HepG2 (cell line): ENCODE measurements at regions of chrX and their contacts with region 1.

Region 1: DNA sequence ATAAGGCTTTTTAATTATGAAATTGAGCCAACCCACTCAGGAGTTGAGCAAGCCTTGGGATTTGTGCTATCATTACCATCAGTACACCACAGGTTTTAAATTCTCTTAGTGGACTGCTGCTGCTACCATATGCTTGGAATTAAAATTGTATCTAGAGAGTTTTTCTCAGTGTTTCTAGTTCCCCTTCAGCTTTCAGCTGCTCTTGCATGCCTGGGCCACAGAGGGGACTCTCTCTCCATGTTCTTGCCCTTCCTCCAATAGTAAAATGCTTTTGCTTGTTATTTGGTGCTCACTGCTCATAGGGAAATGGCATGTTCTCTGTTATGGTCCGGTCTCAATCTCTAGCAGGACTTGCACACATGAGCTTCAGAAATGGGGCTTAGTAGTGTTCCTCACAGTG is 101.9 kb downstream of the IGSF1 start:
- DNase-seq: no peak
- ATAC-seq: no peak
- H3K4me3 ChIP-seq: no peak overlapping the region
- H3K27ac ChIP-seq: no peak overlapping the region
- H3K4me1 ChIP-seq: no peaks in the 10 kb centered on the region
- H3K27me3 ChIP-seq: no peaks in the 10 kb centered on the region
- CTCF ChIP-seq: no peak
- EP300 ChIP-seq: no peak
- POLR2A ChIP-seq: no peak
- RAD21 ChIP-seq: no peak

Region 2: GRCh38 chrX:130401415-130402207 is 785.6 kb before region 1 on chrX and contains the start of gene RBMX2:
- CTCF ChIA-PET with region 1: no interaction called
- POLR2A ChIA-PET with region 1: no interaction called
- in situ Hi-C with region 1: no loop called
- intact Hi-C with region 1: no loop called
- DNase-seq: peak; percentile 57
- ATAC-seq: peak; percentile 95
- H3K4me3 ChIP-seq: peak within 1 kb of the TSS; percentile 67 to 83 (median 83)
- H3K27ac ChIP-seq: peak within 1 kb of the TSS; percentile 87
- H3K4me1 ChIP-seq: peaks cover 18% of the 10 kb centered on the region
- H3K27me3 ChIP-seq: no peaks in the 10 kb centered on the region; a peak in 1 of 5 replicates
- CTCF ChIP-seq: no peak
- EP300 ChIP-seq: no peak
- POLR2A ChIP-seq: peak; percentile 72 to 75
- RAD21 ChIP-seq: no peak
- total RNA-seq, gene RBMX2: 24.4 and 29.2 TPM in 2 replicates

Region 3: DNA sequence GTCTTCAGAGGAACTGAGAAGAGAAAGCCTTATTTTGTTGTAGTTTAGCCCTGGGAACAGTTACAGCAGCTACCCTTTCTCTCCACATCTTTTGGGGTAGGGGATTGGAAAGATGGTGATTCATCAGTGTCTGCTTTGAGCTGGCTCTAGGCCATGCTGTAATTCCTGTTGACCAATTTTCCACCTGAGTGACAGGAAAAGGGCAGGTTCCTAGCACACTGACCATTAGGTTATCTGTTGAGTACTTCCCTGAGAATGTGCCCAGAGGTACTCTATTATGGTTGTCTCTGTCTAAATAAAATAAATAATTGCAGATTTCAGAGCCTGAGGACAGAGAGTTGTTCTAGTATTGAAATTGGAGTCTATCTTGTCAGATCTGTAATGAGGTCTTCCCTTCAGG is 393.2 kb before region 1 on chrX:
- CTCF ChIA-PET with region 1: no interaction called
- POLR2A ChIA-PET with region 1: no interaction called
- in situ Hi-C with region 1: no loop called
- intact Hi-C with region 1: loop called (anchors 5 kb)
- DNase-seq: no peak
- ATAC-seq: no peak
- H3K4me3 ChIP-seq: no peak overlapping the region
- H3K27ac ChIP-seq: no peak overlapping the region
- H3K4me1 ChIP-seq: no peaks in the 10 kb centered on the region
- H3K27me3 ChIP-seq: no peaks in the 10 kb centered on the region
- CTCF ChIP-seq: no peak
- EP300 ChIP-seq: no peak
- POLR2A ChIP-seq: no peak
- RAD21 ChIP-seq: no peak